ENCODE measurements at regions of chr22 and their contacts with region 1.

Region 1: DNA sequence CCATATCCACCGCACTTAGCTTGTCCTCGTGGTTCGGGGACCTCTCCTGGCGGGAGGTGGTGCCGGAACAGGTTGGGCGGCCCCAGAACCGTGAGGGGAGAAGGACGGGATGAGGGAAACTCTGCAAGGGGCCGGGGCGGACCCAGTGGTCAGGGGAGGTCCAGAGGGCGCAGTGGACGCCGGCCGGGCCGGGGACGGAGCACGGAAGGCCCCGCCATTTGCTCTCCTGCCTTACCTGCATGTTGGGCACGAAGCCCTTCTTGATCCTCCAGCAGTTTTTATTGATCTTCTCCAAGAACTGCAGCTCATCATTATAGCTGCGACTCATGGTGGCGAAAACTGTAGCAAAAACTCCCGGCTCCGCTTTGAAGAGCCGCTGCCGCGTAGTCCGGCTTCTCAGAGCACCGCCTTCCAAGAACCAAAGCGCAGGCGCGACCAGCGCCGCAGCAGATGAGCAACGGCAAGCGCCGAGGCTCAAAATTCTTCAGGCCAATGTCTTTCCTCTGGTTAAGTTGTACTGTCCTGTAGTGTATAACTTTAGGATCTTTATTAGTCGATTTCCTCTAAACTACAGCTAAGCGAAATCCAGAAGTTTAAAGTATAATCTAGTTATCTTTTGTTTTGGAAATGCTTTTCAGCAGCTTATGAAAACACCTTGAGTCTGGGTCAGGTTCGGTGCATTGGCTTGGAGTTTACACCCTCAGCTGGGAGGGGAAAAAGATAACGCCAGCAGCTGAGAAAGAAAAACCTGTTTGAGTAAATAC is at the start of gene RTCB:
- DNase-seq: peak; percentile 94
- H3K4me3 Mint-ChIP-seq: peak within 1 kb of the TSS; percentile 96
- H3K27ac Mint-ChIP-seq: peak within 1 kb of the TSS; percentile 90
- H3K4me1 Mint-ChIP-seq: peaks cover 54% of the 10 kb centered on the region
- H3K27me3 Mint-ChIP-seq: peaks cover 13% of the 10 kb centered on the region

Region 2: DNA sequence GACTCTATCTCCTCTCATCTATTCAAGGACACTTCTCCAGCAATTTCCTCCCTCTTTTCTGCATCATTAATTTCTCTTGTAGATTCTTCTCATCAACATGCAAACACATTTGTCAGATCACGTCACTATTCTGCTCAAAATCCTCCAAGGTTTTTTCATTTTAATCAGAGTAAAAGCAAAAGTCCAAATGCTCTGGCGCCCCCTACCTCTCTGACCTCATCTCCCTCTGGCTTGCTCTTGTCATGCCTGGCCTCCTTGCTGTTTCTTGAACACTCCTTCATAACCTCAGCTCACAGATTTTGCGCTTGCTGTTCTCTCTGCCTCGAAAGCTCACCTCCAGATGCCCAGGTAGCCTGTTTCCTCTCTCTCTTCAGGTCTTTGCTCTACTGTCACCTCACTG is 22.3 kb before region 1 on chr22:
- CTCF ChIA-PET with region 1: interaction called, 11 read pairs
- DNase-seq: peak; percentile 50
- H3K4me3 Mint-ChIP-seq: no peak overlapping the region
- H3K27ac Mint-ChIP-seq: no peak overlapping the region
- H3K4me1 Mint-ChIP-seq: no peaks in the 10 kb centered on the region
- H3K27me3 Mint-ChIP-seq: no peaks in the 10 kb centered on the region

Region 3: GRCh38 chr22:32474635-32475467 is 62.8 kb after region 1 on chr22 and contains the start of gene FBXO7:
- CTCF ChIA-PET with region 1: interaction called, 12 read pairs
- DNase-seq: peak; percentile 88
- H3K4me3 Mint-ChIP-seq: peak within 1 kb of the TSS; percentile 95
- H3K27ac Mint-ChIP-seq: peak within 1 kb of the TSS; percentile 97
- H3K4me1 Mint-ChIP-seq: peaks cover 25% of the 10 kb centered on the region
- H3K27me3 Mint-ChIP-seq: no peaks in the 10 kb centered on the region

Measured in activated naive CD4-positive, alpha-beta T cell treated with anti-CD3 and anti-CD28 coated beads, Interleukin-2, amount 10 ng/mL, durations not matched to agents 7 days and 5 days (primary cell).